ENCODE measurements at regions of chr10 and their contacts with region 1.

Region 1: DNA sequence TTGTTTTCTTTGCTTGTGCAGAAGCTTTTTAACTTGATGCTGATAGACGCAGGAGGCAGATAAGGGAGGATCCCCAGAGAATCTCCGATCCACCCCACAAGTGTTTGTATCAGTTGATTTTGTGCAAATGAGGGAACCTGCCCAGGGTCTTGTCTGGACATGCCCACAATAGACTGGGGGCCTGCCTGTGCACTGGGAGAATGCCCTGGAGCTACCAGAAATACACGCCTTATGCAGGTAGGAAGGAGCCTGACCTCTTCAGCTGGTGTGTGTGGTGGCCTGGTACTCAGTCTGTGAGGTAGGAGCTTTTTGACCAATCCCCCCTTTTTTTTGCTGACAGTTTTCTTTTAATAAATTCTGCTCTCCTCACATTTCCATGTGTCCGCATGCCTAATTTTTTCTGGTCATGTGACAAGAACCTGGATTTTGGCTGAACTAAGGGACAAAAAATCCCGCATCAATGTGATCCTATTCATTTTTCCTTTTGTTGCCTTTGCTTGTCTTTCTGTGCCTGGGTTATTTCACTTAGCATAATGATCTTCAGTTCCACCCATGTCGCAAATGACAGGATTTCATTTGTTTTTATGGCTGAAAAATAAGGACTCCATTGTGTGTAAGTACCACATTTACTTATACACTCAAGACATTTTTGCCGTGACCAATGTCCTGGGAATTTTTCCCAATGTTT is 430.6 kb upstream of the NRG3 start:
- DNase-seq: no peak
- H3K27ac ChIP-seq: no peak overlapping the region
- CTCF ChIP-seq: no peak

Region 2: GRCh38 chr10:80397014-80397413 is 1047.4 kb before region 1 on chr10:
- CTCF ChIA-PET with region 1: no interaction called
- POLR2A ChIA-PET with region 1: interaction called, 12 read pairs
- DNase-seq: no peak
- H3K27ac ChIP-seq: no peak overlapping the region
- CTCF ChIP-seq: no peak

Region 3: DNA sequence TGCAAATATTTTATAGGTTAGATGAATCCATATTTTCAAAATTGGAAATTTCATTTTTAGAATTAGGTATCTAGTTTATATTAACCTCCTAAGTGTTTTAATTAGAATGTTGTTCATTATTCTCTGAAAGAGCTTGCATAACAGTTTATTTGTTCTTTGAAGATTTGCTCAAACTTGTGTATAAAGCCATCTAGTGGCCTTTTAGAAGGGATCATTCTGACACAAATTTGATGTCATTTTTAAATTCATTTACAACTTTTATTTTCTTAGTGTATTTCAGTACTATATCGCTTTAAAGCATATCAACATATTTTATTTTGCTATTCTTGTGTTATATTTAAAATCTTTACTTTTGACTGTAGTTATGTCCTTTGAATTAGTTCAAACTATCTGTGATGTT is 96.4 kb before region 1 on chr10:
- CTCF ChIA-PET with region 1: no interaction called
- POLR2A ChIA-PET with region 1: no interaction called
- DNase-seq: no peak
- H3K27ac ChIP-seq: no peak overlapping the region
- CTCF ChIP-seq: no peak

Region 4: DNA sequence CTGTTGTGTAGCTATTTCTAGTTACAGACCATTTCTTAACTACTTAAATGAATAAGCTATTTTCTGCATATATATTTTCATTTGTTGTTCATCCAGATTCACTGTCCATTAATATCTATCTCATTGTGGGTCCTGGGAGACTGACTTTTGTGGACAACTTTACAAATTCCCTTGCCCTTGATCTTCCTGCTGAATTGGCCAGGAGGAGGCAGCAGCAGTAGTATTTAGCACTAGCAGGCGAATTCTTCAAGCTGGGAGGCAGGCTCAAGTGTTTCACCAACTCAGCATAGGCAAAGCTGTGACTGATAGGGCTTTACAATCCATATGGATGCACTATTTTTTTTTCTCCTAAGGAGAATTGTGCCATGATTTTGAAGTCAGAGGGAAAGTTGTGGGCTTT is 30.3 kb before region 1 on chr10:
- CTCF ChIA-PET with region 1: no interaction called
- POLR2A ChIA-PET with region 1: no interaction called
- DNase-seq: no peak
- H3K27ac ChIP-seq: no peak overlapping the region
- CTCF ChIP-seq: no peak

Measured in RWPE1 (cell line).